Cardiac septum (tissue), 1 donor: ENCODE measurements at regions of chr2 and their contacts with region 1.

Region 1: DNA sequence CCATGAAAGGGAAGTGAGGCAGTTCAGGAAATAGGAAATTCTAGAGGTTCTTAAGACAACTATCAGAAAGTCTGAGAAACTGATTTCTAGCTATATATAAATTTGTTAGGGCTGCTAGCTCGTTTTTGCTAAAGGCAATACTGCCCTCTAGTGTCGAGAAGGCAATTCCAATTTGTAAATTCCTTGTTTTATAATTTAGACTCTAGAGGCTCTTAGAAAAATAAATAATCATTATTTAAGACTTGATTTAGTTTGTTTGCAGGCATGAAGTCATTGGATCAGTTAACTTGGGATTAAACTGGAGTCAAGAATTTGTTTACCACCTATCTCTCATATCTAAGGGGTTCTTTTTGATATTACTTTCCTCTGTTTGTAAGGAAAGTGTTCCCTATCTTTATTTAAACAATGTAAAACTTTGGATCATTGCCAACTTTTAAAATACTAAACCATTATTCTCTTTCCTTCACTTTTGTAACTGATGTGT is 66.2 kb downstream of the ACVR2A start:
- DNase-seq: no peak

Region 2: GRCh38 chr2:146734042-146734820 is 1176.8 kb before region 1 on chr2:
- intact Hi-C with region 1: loop called (anchors 5 kb)
- DNase-seq: no peak

Region 3: DNA sequence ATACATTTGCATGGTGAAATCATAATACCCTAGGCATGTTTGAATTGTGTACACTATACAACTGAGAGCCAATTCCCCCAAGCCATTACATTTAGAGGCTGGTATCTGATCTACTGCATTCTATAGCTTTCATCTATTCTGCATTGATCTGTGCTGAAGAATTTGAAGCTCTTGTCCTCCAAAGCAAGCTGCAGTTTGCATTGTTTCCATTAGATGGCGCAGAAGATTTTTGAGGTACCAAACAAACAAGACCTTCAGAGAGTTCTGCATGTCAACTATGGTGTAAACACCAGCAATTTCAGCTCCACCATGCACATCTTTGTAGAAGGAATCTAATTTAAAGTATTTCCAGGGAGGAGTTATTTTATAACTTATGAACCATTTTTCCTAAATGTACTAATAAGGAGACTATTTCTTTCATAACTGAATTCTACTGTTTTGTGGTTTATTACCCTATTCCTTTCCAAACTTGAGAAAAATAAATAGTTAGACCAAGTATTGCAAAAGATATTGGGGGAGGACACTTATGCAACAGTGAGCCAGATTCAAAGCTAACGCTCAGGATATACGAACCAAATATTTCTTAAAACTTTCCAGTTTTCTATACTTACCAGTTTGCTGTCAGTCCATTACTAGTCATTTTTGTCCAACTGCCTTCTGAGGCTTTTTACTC is 828.0 kb before region 1 on chr2:
- intact Hi-C with region 1: loop called (anchors 2 kb)
- DNase-seq: no peak

Region 4: GRCh38 chr2:147843864-147844696 is 67.0 kb before region 1 on chr2:
- intact Hi-C with region 1: loop called (anchors 10 kb)
- DNase-seq: peak; percentile 94